Activated CD4-positive, alpha-beta T cell treated with anti-CD3 and anti-CD28 coated beads, Interleukin-2, amount 10 ng/mL, durations not matched to agents 24 days and 14 days (primary cell): ENCODE measurements at regions of chr6 and their contacts with region 1.

Region 1: DNA sequence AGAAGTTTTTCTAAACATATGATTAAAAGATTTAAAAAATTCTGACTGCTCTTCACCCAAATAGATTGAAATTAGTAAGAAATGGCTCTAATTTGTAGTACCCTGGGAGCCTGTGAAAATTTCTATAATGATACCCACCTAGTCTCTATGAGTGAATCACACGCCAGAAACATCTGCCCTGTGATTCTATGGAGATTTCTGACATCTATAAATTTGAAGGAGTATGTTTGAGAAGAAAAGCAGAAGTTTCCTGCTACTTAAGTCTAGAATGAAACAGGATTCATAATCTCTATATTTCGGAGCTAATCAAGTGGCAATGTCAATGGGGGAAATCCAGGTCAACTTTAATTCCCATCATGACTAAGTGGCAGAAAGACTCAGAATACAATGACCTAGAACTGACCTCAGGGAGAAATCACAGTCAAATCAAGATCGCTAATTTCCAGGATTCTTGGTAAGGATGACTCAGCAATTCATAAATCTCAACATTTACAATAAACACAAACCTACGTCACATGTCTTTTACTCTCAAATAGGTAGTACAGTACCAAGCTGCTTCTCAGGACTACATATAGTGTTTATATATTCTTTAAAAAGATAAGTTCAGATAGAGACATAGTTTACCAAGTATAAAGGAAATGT is 186.2 kb upstream of the TNFAIP3 start:
- DNase-seq: no peak
- H3K4me3 Mint-ChIP-seq: peak overlapping the region; percentile 22
- H3K27ac Mint-ChIP-seq: peak overlapping the region; percentile 61
- H3K4me1 Mint-ChIP-seq: peaks cover 61% of the 10 kb centered on the region
- H3K27me3 Mint-ChIP-seq: no peaks in the 10 kb centered on the region

Region 2: GRCh38 chr6:137625796-137626195 is 55.0 kb before region 1 on chr6:
- intact Hi-C with region 1: no loop called
- DNase-seq: no peak
- H3K4me3 Mint-ChIP-seq: no peak overlapping the region
- H3K27ac Mint-ChIP-seq: no peak overlapping the region
- H3K4me1 Mint-ChIP-seq: no peaks in the 10 kb centered on the region
- H3K27me3 Mint-ChIP-seq: peaks cover 34% of the 10 kb centered on the region

Region 3: DNA sequence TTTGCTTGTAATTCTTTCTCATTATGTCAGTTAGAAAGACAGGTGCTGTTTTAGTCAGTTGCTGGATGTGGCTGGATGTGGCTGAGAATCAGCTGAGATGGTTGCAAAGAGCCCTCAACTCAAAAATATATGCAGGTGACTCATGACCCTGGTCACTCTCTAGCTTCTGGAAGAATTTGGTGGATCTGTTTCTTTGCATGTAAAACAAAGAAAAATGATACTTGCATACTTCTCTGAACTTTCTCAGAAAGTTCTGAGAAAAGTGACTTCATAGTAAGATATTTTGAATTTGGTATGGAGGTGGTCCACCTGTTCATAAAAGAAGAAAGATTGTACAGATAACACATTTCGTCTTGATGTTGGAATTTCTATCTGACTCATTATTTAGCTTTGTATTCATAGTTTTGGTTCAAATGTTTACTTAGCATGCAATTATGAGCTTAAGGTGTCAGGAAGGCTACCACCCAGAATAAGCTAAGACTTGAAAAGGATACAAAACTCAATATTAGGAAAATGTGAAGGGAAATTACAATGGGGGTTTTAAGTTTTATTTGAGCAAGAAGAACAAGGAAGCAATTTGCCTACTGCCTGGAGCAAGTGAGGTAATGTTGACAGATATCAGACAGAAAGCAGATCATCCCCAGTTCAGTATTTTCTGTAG is 23.3 kb before region 1 on chr6:
- intact Hi-C with region 1: loop called (anchors 1 kb)
- DNase-seq: peak; percentile 79
- H3K4me3 Mint-ChIP-seq: peak overlapping the region; percentile 4
- H3K27ac Mint-ChIP-seq: peak overlapping the region; percentile 45
- H3K4me1 Mint-ChIP-seq: peaks cover 29% of the 10 kb centered on the region
- H3K27me3 Mint-ChIP-seq: no peaks in the 10 kb centered on the region

Region 4: GRCh38 chr6:137666202-137666774 is 14.5 kb before region 1 on chr6:
- intact Hi-C with region 1: loop called (anchors 1 kb)
- DNase-seq: peak; percentile 76
- H3K4me3 Mint-ChIP-seq: peak overlapping the region; percentile 59
- H3K27ac Mint-ChIP-seq: peak overlapping the region; percentile 83
- H3K4me1 Mint-ChIP-seq: peaks cover 32% of the 10 kb centered on the region
- H3K27me3 Mint-ChIP-seq: peaks cover 8% of the 10 kb centered on the region

Region 5: GRCh38 chr6:137697267-137697938 is 16.6 kb after region 1 on chr6:
- intact Hi-C with region 1: loop called (anchors 1 kb)
- DNase-seq: no peak
- H3K4me3 Mint-ChIP-seq: no peak overlapping the region
- H3K27ac Mint-ChIP-seq: peak overlapping the region; percentile 51
- H3K4me1 Mint-ChIP-seq: peaks cover 51% of the 10 kb centered on the region
- H3K27me3 Mint-ChIP-seq: no peaks in the 10 kb centered on the region

Region 6: GRCh38 chr6:137728385-137729349 is 47.8 kb after region 1 on chr6:
- intact Hi-C with region 1: no loop called
- DNase-seq: no peak
- H3K4me3 Mint-ChIP-seq: no peak overlapping the region
- H3K27ac Mint-ChIP-seq: no peak overlapping the region
- H3K4me1 Mint-ChIP-seq: peaks cover 1% of the 10 kb centered on the region
- H3K27me3 Mint-ChIP-seq: peaks cover 6% of the 10 kb centered on the region

Region 7: GRCh38 chr6:137873273-137873762 is 192.5 kb after region 1 on chr6:
- intact Hi-C with region 1: loop called (anchors 1 kb)
- DNase-seq: peak; percentile 89
- H3K4me3 Mint-ChIP-seq: peak overlapping the region; percentile 87
- H3K27ac Mint-ChIP-seq: peak overlapping the region; percentile 86
- H3K4me1 Mint-ChIP-seq: peaks cover 44% of the 10 kb centered on the region
- H3K27me3 Mint-ChIP-seq: no peaks in the 10 kb centered on the region

Region 8: GRCh38 chr6:137903933-137904821 is 223.4 kb after region 1 on chr6:
- intact Hi-C with region 1: loop called (anchors 1 kb)
- DNase-seq: peak; percentile 81
- H3K4me3 Mint-ChIP-seq: peak overlapping the region; percentile 75
- H3K27ac Mint-ChIP-seq: peak overlapping the region; percentile 99
- H3K4me1 Mint-ChIP-seq: peaks cover 50% of the 10 kb centered on the region
- H3K27me3 Mint-ChIP-seq: no peaks in the 10 kb centered on the region